CD8-positive, alpha-beta memory T cell (primary cell): ENCODE measurements at regions of chr16 and their contacts with region 1.

Region 1: DNA sequence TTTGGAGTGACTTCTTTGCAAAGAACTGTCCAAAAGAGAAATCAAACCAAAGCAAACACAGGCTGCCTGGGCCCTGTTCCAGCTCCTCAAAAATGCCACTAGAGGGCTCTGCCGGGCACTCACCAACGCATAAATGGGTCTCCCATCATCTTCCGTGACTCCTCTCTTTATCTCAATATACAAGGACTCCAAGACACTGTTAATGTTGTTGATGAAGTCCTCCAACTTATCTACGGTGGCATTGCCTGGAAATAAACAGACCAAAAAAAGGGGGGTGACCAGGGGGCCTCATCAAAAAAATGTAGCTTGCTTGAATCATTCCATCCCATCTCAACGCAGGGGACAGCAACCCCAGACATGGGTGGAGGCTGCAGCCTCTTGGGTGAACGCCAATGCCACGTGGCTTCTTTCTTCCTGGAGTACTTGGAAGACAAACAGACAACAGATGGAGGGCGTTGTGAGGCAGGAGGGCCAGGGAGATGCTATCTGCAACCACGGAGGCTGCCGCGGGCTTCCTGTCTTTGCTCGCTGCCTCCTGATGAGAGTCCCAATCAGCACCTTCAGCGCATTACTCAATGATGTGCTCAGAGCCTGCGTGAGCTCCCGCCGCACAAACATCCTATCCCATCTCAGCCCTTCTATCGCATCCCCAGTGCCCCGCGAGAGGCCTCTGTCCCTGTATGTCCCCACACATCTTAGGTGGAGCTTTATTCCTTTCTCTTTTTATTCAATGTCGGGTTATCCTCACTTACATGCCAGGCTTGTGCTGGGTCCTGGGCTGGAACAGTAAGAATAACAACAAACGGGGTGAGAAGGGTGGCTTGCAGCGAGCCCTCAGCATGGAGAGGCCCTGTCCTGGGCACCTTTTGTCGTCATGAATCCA is 32.0 kb downstream of the KDM8 start:
- DNase-seq: peak; percentile 85 to 97 (median 96)
- H3K4me3 ChIP-seq: peak overlapping the region; percentile 17
- H3K4me3 Mint-ChIP-seq: peak overlapping the region; percentile 49 to 90 (median 81)
- H3K27ac ChIP-seq: peak overlapping the region; percentile 83
- H3K27ac Mint-ChIP-seq: peak overlapping the region; percentile 97 to 100 (median 99)
- H3K4me1 ChIP-seq: peaks cover 97% of the 10 kb centered on the region
- H3K4me1 Mint-ChIP-seq: peaks cover 88 to 100% (median 95%) of the 10 kb centered on the region in 3 donors
- H3K27me3 ChIP-seq: no peaks in the 10 kb centered on the region
- H3K27me3 Mint-ChIP-seq: peaks cover 0 to 4% of the 10 kb centered on the region in 2 donors

Region 2: GRCh38 chr16:27145630-27146029 is 89.7 kb before region 1 on chr16:
- CTCF ChIA-PET with region 1: no interaction called
- POLR2A ChIA-PET with region 1: no interaction called
- DNase-seq: no peak
- H3K4me3 ChIP-seq: no peak overlapping the region
- H3K4me3 Mint-ChIP-seq: no peak overlapping the region
- H3K27ac ChIP-seq: no peak overlapping the region
- H3K27ac Mint-ChIP-seq: peak overlapping the region in 1 of 8 donors; percentile 32
- H3K4me1 ChIP-seq: no peaks in the 10 kb centered on the region
- H3K4me1 Mint-ChIP-seq: no peaks in the 10 kb centered on the region
- H3K27me3 ChIP-seq: no peaks in the 10 kb centered on the region
- H3K27me3 Mint-ChIP-seq: peaks cover 15 to 29% of the 10 kb centered on the region in 2 donors

Region 3: DNA sequence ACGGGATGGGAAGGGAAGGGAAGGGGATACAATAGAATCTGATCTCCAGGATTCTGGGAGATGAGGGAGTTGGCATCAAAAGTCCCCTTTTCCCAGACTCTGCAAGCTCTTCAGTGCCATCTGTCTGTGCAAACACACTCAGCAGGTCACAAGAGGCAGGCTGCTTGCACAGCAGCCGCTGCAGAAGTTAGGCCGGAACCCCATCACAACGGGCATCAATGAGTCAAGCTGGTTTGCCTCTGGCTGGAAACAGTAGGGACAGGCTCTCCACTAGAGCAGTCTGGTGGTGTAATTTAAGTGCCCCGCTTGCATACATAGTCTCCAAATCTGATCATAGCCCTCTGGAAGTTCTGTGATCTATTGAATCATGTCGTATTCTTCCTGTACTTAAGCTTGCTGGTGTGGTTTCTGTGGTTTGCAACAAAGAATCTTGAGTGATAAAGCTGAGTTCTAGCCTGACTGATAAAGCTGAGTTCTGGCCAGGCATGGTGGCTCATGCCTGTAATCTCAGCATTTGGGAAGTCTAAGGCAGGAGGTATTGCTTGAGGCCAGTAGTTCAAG is 65.7 kb before region 1 on chr16:
- CTCF ChIA-PET with region 1: interaction called, 16 read pairs
- POLR2A ChIA-PET with region 1: interaction called, 4 read pairs
- DNase-seq: peak; percentile 57 to 88 (median 85)
- H3K4me3 ChIP-seq: no peak overlapping the region
- H3K4me3 Mint-ChIP-seq: peak overlapping the region; percentile 2 to 81 (median 68)
- H3K27ac ChIP-seq: no peak overlapping the region
- H3K27ac Mint-ChIP-seq: peak overlapping the region; percentile 46 to 99 (median 92)
- H3K4me1 ChIP-seq: peaks cover 66% of the 10 kb centered on the region
- H3K4me1 Mint-ChIP-seq: peaks cover 56 to 71% (median 69%) of the 10 kb centered on the region in 3 donors
- H3K27me3 ChIP-seq: no peaks in the 10 kb centered on the region
- H3K27me3 Mint-ChIP-seq: no peaks in the 10 kb centered on the region

Region 4: GRCh38 chr16:27203429-27204231 is 31.7 kb before region 1 on chr16 and contains the start of gene KDM8:
- CTCF ChIA-PET with region 1: interaction called, 22 read pairs
- POLR2A ChIA-PET with region 1: interaction called, 18 read pairs
- DNase-seq: peak; percentile 99 to 100 (median 100)
- H3K4me3 ChIP-seq: peak within 1 kb of the TSS; percentile 87
- H3K4me3 Mint-ChIP-seq: peak within 1 kb of the TSS; percentile 90 to 99 (median 95)
- H3K27ac ChIP-seq: peak within 1 kb of the TSS; percentile 86
- H3K27ac Mint-ChIP-seq: peak within 1 kb of the TSS; percentile 93 to 100 (median 99)
- H3K4me1 ChIP-seq: peaks cover 51% of the 10 kb centered on the region
- H3K4me1 Mint-ChIP-seq: peaks cover 52 to 63% (median 63%) of the 10 kb centered on the region in 3 donors
- H3K27me3 ChIP-seq: no peaks in the 10 kb centered on the region
- H3K27me3 Mint-ChIP-seq: no peaks in the 10 kb centered on the region
- total RNA-seq, gene KDM8: 9.1 to 10.8 TPM

Region 5: GRCh38 chr16:27291106-27291505 is 55.8 kb after region 1 on chr16:
- CTCF ChIA-PET with region 1: no interaction called
- POLR2A ChIA-PET with region 1: no interaction called
- DNase-seq: no peak
- H3K4me3 ChIP-seq: no peak overlapping the region
- H3K4me3 Mint-ChIP-seq: no peak overlapping the region
- H3K27ac ChIP-seq: no peak overlapping the region
- H3K27ac Mint-ChIP-seq: peak overlapping the region in 1 of 8 donors; percentile 51
- H3K4me1 ChIP-seq: peaks cover 25% of the 10 kb centered on the region
- H3K4me1 Mint-ChIP-seq: peaks cover under 1 to 11% (median 11%) of the 10 kb centered on the region in 3 donors
- H3K27me3 ChIP-seq: no peaks in the 10 kb centered on the region
- H3K27me3 Mint-ChIP-seq: no peaks in the 10 kb centered on the region

Region 6: DNA sequence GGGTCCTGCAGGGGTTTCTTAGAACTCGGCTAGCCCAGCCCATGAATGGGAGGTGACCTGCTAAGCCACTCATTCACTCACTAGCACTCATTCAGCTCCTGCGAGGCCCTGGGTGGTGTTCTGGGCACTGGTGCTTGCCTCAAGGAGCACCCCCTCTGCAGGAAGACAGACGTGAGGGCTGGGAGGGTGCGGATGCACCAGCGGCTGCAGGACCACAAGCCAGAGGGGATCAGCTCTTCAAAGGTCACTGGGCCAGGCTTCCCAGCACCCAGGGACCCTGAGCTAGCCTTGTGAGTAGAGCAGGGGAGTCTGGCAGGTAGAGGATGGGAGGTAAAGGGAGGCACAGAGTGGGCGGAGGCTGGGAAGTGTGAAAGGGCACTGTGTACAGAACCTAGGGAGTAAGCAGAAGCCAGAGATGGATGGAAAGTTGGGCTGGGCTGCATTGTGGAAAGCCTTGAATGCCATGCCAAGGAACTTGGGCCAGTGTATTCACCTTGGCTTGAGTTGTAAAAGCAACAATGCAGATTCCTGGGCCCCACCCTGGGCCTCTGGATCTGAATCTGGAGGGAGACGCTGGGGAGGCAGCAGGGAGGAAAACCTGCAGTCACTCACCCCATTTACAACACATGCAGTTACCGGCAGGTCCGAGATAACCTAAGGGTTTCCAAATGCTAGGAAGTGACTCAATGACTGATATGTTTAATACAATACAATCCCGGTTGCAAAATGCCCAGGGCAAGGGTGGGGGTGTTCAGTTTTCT is 80.2 kb after region 1 on chr16:
- CTCF ChIA-PET with region 1: interaction called, 28 read pairs
- POLR2A ChIA-PET with region 1: interaction called, 3 read pairs
- DNase-seq: peak in 4 of 5 donors; percentile 11 to 70 (median 42)
- H3K4me3 ChIP-seq: peak overlapping the region; percentile 90
- H3K4me3 Mint-ChIP-seq: peak overlapping the region; percentile 86 to 96 (median 95)
- H3K27ac ChIP-seq: peak overlapping the region; percentile 89
- H3K27ac Mint-ChIP-seq: peak overlapping the region; percentile 96 to 100 (median 99)
- H3K4me1 ChIP-seq: peaks cover 65% of the 10 kb centered on the region
- H3K4me1 Mint-ChIP-seq: peaks cover 54 to 69% (median 68%) of the 10 kb centered on the region in 3 donors
- H3K27me3 ChIP-seq: no peaks in the 10 kb centered on the region
- H3K27me3 Mint-ChIP-seq: peaks cover 0 to 3% of the 10 kb centered on the region in 2 donors

Region 7: GRCh38 chr16:27408012-27408601 is 172.8 kb after region 1 on chr16:
- CTCF ChIA-PET with region 1: interaction called, 23 read pairs
- POLR2A ChIA-PET with region 1: interaction called, 5 read pairs
- DNase-seq: peak in 3 of 5 donors; percentile 27 to 64 (median 35)
- H3K4me3 ChIP-seq: peak overlapping the region; percentile 6
- H3K4me3 Mint-ChIP-seq: peak overlapping the region; percentile 71 to 100 (median 99)
- H3K27ac ChIP-seq: peak overlapping the region; percentile 2
- H3K27ac Mint-ChIP-seq: peak overlapping the region; percentile 91 to 100 (median 98)
- H3K4me1 ChIP-seq: peaks cover 70% of the 10 kb centered on the region
- H3K4me1 Mint-ChIP-seq: peaks cover 84 to 95% (median 93%) of the 10 kb centered on the region in 3 donors
- H3K27me3 ChIP-seq: no peaks in the 10 kb centered on the region
- H3K27me3 Mint-ChIP-seq: peaks cover 0 to 7% of the 10 kb centered on the region in 2 donors

Region 8: DNA sequence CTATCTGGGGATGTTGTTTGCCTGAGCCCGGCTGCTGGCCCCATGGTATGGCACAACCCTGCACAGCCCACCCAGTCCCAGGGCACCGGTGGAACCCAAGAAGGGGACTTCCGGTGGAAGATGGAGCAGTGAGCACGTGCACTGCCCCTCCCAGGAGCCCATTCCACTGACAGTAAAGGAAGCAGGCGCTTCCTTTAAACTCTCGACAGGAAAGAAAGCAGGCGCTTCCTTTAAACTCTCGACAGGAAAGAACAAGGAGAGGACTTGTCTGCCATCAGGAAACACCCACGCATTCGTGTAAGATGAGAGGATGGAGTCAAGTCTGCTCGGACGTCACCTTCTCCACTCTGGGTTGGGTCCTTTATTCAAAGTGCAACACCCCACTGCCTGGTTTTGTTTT is 220.4 kb after region 1 on chr16:
- CTCF ChIA-PET with region 1: interaction called, 29 read pairs
- POLR2A ChIA-PET with region 1: interaction called, 7 read pairs
- DNase-seq: peak in 1 of 5 donors; percentile 31
- H3K4me3 ChIP-seq: no peak overlapping the region
- H3K4me3 Mint-ChIP-seq: peak overlapping the region in 2 of 7 donors; percentile 6 to 48
- H3K27ac ChIP-seq: no peak overlapping the region
- H3K27ac Mint-ChIP-seq: peak overlapping the region in 6 of 8 donors; percentile 77 to 99 (median 92)
- H3K4me1 ChIP-seq: peaks cover 56% of the 10 kb centered on the region
- H3K4me1 Mint-ChIP-seq: peaks cover 60 to 85% (median 68%) of the 10 kb centered on the region in 3 donors
- H3K27me3 ChIP-seq: no peaks in the 10 kb centered on the region
- H3K27me3 Mint-ChIP-seq: peaks cover 0 to 2% of the 10 kb centered on the region in 2 donors